ENCODE measurements at regions of chr4 and their contacts with region 1.

Region 1: GRCh38 chr4:104930298-104930697 is 216.4 kb upstream of the TET2 start:
- DNase-seq: no peak
- ATAC-seq: no peak
- H3K4me3 ChIP-seq: no peak overlapping the region
- H3K27ac ChIP-seq: no peak overlapping the region
- H3K4me1 ChIP-seq: 0 out of 4 replicates have a peak, but pooled peaks cover 0 to 4% of the 10 kb centered on the region in 2 experiments
- H3K27me3 ChIP-seq: no peaks in the 10 kb centered on the region
- CTCF ChIP-seq: no peak
- POLR2A ChIP-seq: no peak
- RAD21 ChIP-seq: no peak

Region 2: GRCh38 chr4:104941661-104942062 is 11.4 kb after region 1 on chr4:
- CTCF ChIA-PET with region 1: no interaction called
- POLR2A ChIA-PET with region 1: no interaction called
- RAD21 ChIA-PET with region 1: no interaction called
- intact Hi-C with region 1: no loop called
- DNase-seq: no peak
- ATAC-seq: no peak
- H3K4me3 ChIP-seq: no peak overlapping the region
- H3K27ac ChIP-seq: no peak overlapping the region
- H3K4me1 ChIP-seq: no peaks in the 10 kb centered on the region
- H3K27me3 ChIP-seq: no peaks in the 10 kb centered on the region
- CTCF ChIP-seq: no peak
- POLR2A ChIP-seq: no peak
- RAD21 ChIP-seq: no peak

Region 3: DNA sequence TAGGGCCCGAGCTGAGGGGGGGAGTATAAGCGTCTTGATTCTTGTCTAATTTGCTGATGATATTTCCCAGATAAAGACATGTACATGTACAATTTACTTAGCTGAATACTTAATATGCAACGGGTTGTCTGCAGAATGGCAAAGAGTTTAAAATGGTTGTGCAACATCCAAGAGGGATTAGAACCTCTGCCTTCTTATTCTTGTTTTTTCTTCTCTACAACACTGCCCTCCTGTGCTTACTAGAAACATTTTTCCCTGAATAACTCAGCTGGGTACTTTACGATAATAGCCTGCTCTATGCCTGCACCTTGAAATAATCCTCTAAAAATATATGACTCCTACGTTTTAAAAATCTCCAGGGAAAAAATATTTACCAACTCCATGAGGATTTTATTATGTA is 736.4 kb after region 1 on chr4:
- CTCF ChIA-PET with region 1: no interaction called
- POLR2A ChIA-PET with region 1: no interaction called
- RAD21 ChIA-PET with region 1: no interaction called
- intact Hi-C with region 1: loop called (anchors 5 kb)
- DNase-seq: no peak
- ATAC-seq: peak; percentile 73
- H3K4me3 ChIP-seq: no peak overlapping the region
- H3K27ac ChIP-seq: no peak overlapping the region
- H3K4me1 ChIP-seq: no peaks in the 10 kb centered on the region
- H3K27me3 ChIP-seq: no peaks in the 10 kb centered on the region
- CTCF ChIP-seq: peak; percentile 21 to 36 (median 32); a peak in 4 of 6 replicates
- POLR2A ChIP-seq: no peak
- RAD21 ChIP-seq: peak; percentile 59

Region 4: DNA sequence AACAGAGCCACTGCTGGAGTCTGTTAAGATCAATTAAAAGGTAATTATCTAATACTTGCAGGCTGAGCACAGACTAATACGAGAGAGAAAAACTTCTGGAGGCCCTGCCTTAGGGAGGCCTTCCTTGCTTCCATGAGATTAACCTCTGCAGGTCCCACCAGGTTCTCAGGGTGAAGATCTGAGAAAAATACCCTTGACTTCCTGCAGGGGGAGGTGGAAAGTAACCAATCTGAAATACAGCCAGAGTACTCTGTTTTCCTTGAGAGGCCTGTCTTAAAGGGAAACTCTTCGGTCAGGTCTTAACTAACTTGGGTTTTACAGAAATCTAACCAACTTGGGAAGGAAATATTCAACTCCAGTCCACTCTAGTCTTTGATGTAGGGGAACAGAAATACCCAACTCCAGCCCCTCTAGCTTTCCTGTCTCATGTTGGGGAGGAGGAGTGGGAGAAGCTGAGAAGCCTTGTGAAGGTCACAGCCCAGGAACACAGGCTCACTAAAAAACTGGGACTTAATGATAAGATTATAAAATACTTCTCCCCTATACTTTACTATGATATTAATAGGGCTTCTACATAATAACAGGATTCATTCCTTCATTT is 1308.6 kb after region 1 on chr4:
- CTCF ChIA-PET with region 1: no interaction called
- POLR2A ChIA-PET with region 1: no interaction called
- RAD21 ChIA-PET with region 1: no interaction called
- intact Hi-C with region 1: no loop called
- DNase-seq: peak; percentile 27
- ATAC-seq: peak; percentile 92
- H3K4me3 ChIP-seq: no peak overlapping the region
- H3K27ac ChIP-seq: no peak overlapping the region
- H3K4me1 ChIP-seq: no peaks in the 10 kb centered on the region
- H3K27me3 ChIP-seq: no peaks in the 10 kb centered on the region
- CTCF ChIP-seq: peak in 2 of 3 experiments; percentile 71 to 76; a peak in 4 of 6 replicates
- POLR2A ChIP-seq: no peak
- RAD21 ChIP-seq: peak; percentile 49; the same call in 1 of the 2 replicates